ENCODE measurements at regions of chr9 and their contacts with region 1.

Region 1: GRCh38 chr9:113488490-113488889 is 25.0 kb downstream of the RGS3 start:
- DNase-seq: peak; percentile 82

Region 2: DNA sequence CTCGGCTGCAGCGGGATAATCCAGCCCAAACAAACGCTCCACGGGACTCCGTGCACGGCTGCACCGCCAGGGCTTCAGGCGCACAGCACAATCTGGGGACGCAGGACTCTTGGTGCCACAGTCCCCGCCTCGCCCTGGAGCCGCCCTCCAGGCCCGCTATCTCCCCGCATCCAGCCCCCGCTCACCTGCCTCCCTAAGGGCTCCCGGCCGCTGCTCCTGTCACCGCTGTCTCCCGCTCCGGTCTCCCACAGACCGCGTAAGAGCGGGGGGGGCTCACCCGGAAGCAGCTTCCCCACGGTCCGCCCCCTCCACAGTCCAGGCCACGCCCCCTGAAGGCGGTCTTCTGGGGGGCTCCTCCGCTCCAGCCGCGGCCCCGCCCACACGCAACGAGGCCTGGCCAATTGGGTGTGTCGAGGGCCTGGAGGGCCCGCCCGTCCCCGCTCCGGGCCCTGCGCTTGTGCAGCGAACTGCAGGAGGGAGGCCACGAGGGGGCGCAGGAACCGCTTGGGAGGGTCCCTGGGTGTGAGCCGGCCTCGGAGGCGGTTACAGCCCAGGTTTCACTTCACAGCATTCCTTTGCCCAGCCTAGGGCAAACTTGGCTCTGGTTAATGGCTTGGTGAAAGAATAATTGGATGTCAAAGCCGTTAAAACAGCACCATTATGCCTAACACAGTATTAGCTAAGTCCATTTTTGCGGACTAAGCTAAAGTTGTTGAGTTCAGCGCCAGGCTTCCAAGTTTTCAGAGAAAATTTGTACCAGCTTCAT is 87.3 kb before region 1 on chr9 and contains the start of gene ALAD:
- intact Hi-C with region 1: no loop called
- DNase-seq: peak; percentile 100
- total RNA-seq, gene ALAD: 68.2 TPM

Region 3: DNA sequence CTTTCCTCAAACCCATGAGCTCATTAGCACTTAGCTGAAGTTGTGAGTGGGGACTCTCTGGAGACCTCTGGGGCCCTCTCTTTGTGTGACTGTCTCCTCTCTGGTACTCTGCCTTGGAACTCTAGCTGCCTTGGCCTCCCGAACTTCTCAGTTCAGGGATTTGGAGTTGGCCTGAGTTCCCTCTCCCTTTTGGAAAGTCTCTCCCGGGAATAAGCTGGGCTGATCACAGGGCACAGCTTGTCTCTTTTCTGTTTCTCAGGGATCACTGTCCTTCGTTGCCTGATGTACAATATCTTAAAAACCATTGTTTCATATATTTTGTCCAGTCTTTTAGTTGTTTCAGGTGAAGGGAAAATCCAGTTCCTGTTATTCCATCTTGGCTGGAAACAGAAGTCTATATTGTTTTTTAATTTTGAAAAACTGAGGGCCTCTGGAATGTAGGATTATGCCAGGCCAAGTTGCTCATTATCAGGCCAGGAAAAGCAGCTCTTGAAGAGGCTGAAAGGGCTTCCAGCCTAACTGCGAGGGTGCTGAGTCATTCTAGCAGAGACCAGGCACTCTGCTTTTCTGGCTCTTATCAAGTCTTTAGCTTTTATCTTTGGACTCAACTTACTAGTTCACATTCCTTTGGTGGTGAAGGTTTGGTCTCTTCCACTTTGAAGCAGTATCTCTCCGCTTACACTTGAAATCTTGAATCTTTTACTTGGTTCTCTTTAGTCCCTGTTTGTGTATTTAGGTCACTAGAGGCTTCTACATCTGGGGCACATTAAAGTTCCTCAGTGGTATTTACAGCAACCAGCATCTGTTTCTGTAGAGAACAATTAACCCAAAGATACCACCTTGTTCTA is 33.4 kb before region 1 on chr9:
- intact Hi-C with region 1: loop called (anchors 2 kb)
- DNase-seq: no peak

Measured in cardiac septum (tissue), 1 donor.